CD4-positive, alpha-beta memory T cell (primary cell): ENCODE measurements at regions of chr15 and their contacts with region 1.

Region 1: GRCh38 chr15:60916679-60917460 is 312.2 kb downstream of the RORA start:
- DNase-seq: peak; percentile 85 to 95 (median 88)
- H3K4me3 ChIP-seq: no peak overlapping the region
- H3K4me3 Mint-ChIP-seq: peak overlapping the region in 5 of 8 donors; percentile 18 to 72 (median 57)
- H3K27ac ChIP-seq: peak overlapping the region; percentile 55
- H3K27ac Mint-ChIP-seq: peak overlapping the region; percentile 82 to 98 (median 94)
- H3K4me1 ChIP-seq: peaks cover 12% of the 10 kb centered on the region
- H3K4me1 Mint-ChIP-seq: peaks cover 7 to 17% (median 10%) of the 10 kb centered on the region in 4 donors
- H3K27me3 ChIP-seq: no peaks in the 10 kb centered on the region
- H3K27me3 Mint-ChIP-seq: no peaks in the 10 kb centered on the region

Region 2: GRCh38 chr15:60362321-60363086 is 554.4 kb before region 1 on chr15:
- CTCF ChIA-PET with region 1: interaction called, 19 read pairs
- POLR2A ChIA-PET with region 1: interaction called, 3 read pairs
- intact Hi-C with region 1: loop called (anchors 1 kb)
- DNase-seq: peak; percentile 3 to 49 (median 22)
- H3K4me3 ChIP-seq: no peak overlapping the region
- H3K4me3 Mint-ChIP-seq: peak overlapping the region in 1 of 8 donors; percentile 49
- H3K27ac ChIP-seq: no peak overlapping the region
- H3K27ac Mint-ChIP-seq: peak overlapping the region; percentile 17 to 87 (median 81)
- H3K4me1 ChIP-seq: peaks cover 25% of the 10 kb centered on the region
- H3K4me1 Mint-ChIP-seq: peaks cover 21 to 39% (median 29%) of the 10 kb centered on the region in 4 donors
- H3K27me3 ChIP-seq: no peaks in the 10 kb centered on the region
- H3K27me3 Mint-ChIP-seq: no peaks in the 10 kb centered on the region

Region 3: GRCh38 chr15:60548101-60548500 is 368.8 kb before region 1 on chr15:
- CTCF ChIA-PET with region 1: interaction called, 11 read pairs
- POLR2A ChIA-PET with region 1: no interaction called
- intact Hi-C with region 1: no loop called
- DNase-seq: peak; percentile 47 to 68 (median 58)
- H3K4me3 ChIP-seq: no peak overlapping the region
- H3K4me3 Mint-ChIP-seq: peak overlapping the region; percentile 68 to 86 (median 77)
- H3K27ac ChIP-seq: peak overlapping the region; percentile 68
- H3K27ac Mint-ChIP-seq: peak overlapping the region; percentile 92 to 99 (median 97)
- H3K4me1 ChIP-seq: peaks cover 100% of the 10 kb centered on the region
- H3K4me1 Mint-ChIP-seq: peaks cover 80 to 100% (median 90%) of the 10 kb centered on the region in 4 donors
- H3K27me3 ChIP-seq: no peaks in the 10 kb centered on the region
- H3K27me3 Mint-ChIP-seq: no peaks in the 10 kb centered on the region

Region 4: GRCh38 chr15:60649845-60650548 is 266.9 kb before region 1 on chr15:
- CTCF ChIA-PET with region 1: interaction called, 10 read pairs
- POLR2A ChIA-PET with region 1: interaction called, 4 read pairs
- intact Hi-C with region 1: loop called (anchors 1 kb)
- DNase-seq: peak; percentile 73 to 85 (median 81)
- H3K4me3 ChIP-seq: peak overlapping the region in 1 of 2 donors; percentile 46
- H3K4me3 Mint-ChIP-seq: peak overlapping the region; percentile 67 to 92 (median 85)
- H3K27ac ChIP-seq: peak overlapping the region; percentile 66
- H3K27ac Mint-ChIP-seq: peak overlapping the region; percentile 93 to 99 (median 97)
- H3K4me1 ChIP-seq: peaks cover 46% of the 10 kb centered on the region
- H3K4me1 Mint-ChIP-seq: peaks cover 36 to 55% (median 47%) of the 10 kb centered on the region in 4 donors
- H3K27me3 ChIP-seq: no peaks in the 10 kb centered on the region
- H3K27me3 Mint-ChIP-seq: no peaks in the 10 kb centered on the region

Region 5: GRCh38 chr15:60672400-60672799 is 244.5 kb before region 1 on chr15:
- CTCF ChIA-PET with region 1: interaction called, 16 read pairs
- POLR2A ChIA-PET with region 1: no interaction called
- intact Hi-C with region 1: loop called (anchors 1 kb)
- DNase-seq: peak in 1 of 5 donors; percentile 18
- H3K4me3 ChIP-seq: no peak overlapping the region
- H3K4me3 Mint-ChIP-seq: no peak overlapping the region
- H3K27ac ChIP-seq: no peak overlapping the region
- H3K27ac Mint-ChIP-seq: peak overlapping the region in 1 of 7 donors; percentile 6
- H3K4me1 ChIP-seq: peaks cover 18% of the 10 kb centered on the region
- H3K4me1 Mint-ChIP-seq: peaks cover 10 to 27% (median 20%) of the 10 kb centered on the region in 4 donors
- H3K27me3 ChIP-seq: no peaks in the 10 kb centered on the region
- H3K27me3 Mint-ChIP-seq: no peaks in the 10 kb centered on the region

Region 6: GRCh38 chr15:60830479-60830878 is 86.4 kb before region 1 on chr15:
- CTCF ChIA-PET with region 1: no interaction called
- POLR2A ChIA-PET with region 1: no interaction called
- intact Hi-C with region 1: no loop called
- DNase-seq: no peak
- H3K4me3 ChIP-seq: no peak overlapping the region
- H3K4me3 Mint-ChIP-seq: no peak overlapping the region
- H3K27ac ChIP-seq: no peak overlapping the region
- H3K27ac Mint-ChIP-seq: no peak overlapping the region
- H3K4me1 ChIP-seq: peaks cover 14% of the 10 kb centered on the region
- H3K4me1 Mint-ChIP-seq: peaks cover 22 to 67% (median 30%) of the 10 kb centered on the region in 4 donors
- H3K27me3 ChIP-seq: no peaks in the 10 kb centered on the region
- H3K27me3 Mint-ChIP-seq: no peaks in the 10 kb centered on the region

Region 7: DNA sequence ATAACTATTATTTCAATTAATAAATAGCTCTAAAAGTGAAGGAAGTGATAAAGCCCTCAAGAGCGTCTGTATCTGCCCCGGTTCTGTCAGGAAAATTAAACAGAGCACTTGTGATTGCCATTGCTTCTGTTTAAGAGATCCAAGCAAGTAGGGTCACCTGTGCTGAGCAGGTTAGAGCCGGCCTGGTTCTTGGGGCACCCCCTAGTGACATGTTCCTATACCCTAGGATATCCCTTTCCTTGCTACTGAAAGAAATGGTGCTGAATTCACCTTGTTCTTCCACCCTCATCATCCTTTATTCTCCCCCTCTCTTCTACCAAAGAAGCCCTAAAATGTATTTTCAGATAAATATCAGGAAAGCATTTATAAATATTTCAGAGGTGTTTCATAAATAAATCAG is 11.3 kb before region 1 on chr15:
- CTCF ChIA-PET with region 1: interaction called, 74 read pairs
- POLR2A ChIA-PET with region 1: interaction called, 5 read pairs
- intact Hi-C with region 1: no loop called
- DNase-seq: peak; percentile 36 to 50 (median 43)
- H3K4me3 ChIP-seq: no peak overlapping the region
- H3K4me3 Mint-ChIP-seq: no peak overlapping the region
- H3K27ac ChIP-seq: no peak overlapping the region
- H3K27ac Mint-ChIP-seq: peak overlapping the region in 1 of 7 donors; percentile 32
- H3K4me1 ChIP-seq: no peaks in the 10 kb centered on the region
- H3K4me1 Mint-ChIP-seq: peaks cover 3 to 20% (median 5%) of the 10 kb centered on the region in 4 donors
- H3K27me3 ChIP-seq: no peaks in the 10 kb centered on the region
- H3K27me3 Mint-ChIP-seq: no peaks in the 10 kb centered on the region

Region 8: GRCh38 chr15:60932051-60932915 is 15.4 kb after region 1 on chr15:
- CTCF ChIA-PET with region 1: interaction called, 22 read pairs
- POLR2A ChIA-PET with region 1: no interaction called
- intact Hi-C with region 1: no loop called
- DNase-seq: peak; percentile 52 to 86 (median 61)
- H3K4me3 ChIP-seq: no peak overlapping the region
- H3K4me3 Mint-ChIP-seq: peak overlapping the region in 6 of 8 donors; percentile 5 to 65 (median 31)
- H3K27ac ChIP-seq: no peak overlapping the region
- H3K27ac Mint-ChIP-seq: peak overlapping the region in 4 of 7 donors; percentile 8 to 57 (median 55)
- H3K4me1 ChIP-seq: peaks cover 14% of the 10 kb centered on the region
- H3K4me1 Mint-ChIP-seq: peaks cover 9 to 25% (median 14%) of the 10 kb centered on the region in 4 donors
- H3K27me3 ChIP-seq: no peaks in the 10 kb centered on the region
- H3K27me3 Mint-ChIP-seq: no peaks in the 10 kb centered on the region

Region 9: GRCh38 chr15:61141497-61142125 is 224.7 kb after region 1 on chr15:
- CTCF ChIA-PET with region 1: no interaction called
- POLR2A ChIA-PET with region 1: no interaction called
- intact Hi-C with region 1: no loop called
- DNase-seq: no peak
- H3K4me3 ChIP-seq: no peak overlapping the region
- H3K4me3 Mint-ChIP-seq: no peak overlapping the region
- H3K27ac ChIP-seq: no peak overlapping the region
- H3K27ac Mint-ChIP-seq: no peak overlapping the region
- H3K4me1 ChIP-seq: no peaks in the 10 kb centered on the region
- H3K4me1 Mint-ChIP-seq: peaks cover 0 to 3% (median 1%) of the 10 kb centered on the region in 4 donors
- H3K27me3 ChIP-seq: peaks cover 14% of the 10 kb centered on the region
- H3K27me3 Mint-ChIP-seq: peaks cover 18 to 47% of the 10 kb centered on the region in 2 donors